ENCODE measurements at regions of chr1 and their contacts with region 1.

Region 1: GRCh38 chr1:214551436-214552173 is at the start of gene PTPN14:
- DNase-seq: peak; percentile 98
- H3K4me3 ChIP-seq: peak within 1 kb of the TSS; percentile 92
- H3K27ac ChIP-seq: peak within 1 kb of the TSS; percentile 93
- H3K4me1 ChIP-seq: peaks cover 30% of the 10 kb centered on the region
- H3K27me3 ChIP-seq: no peaks in the 10 kb centered on the region
- CTCF ChIP-seq: peak; percentile 35; the same call in 1 of the 2 replicates
- total RNA-seq, gene PTPN14: 103 and 114 TPM in 2 replicates

Region 2: GRCh38 chr1:214404154-214404553 is 147.5 kb before region 1 on chr1:
- CTCF ChIA-PET with region 1: interaction called, 4 read pairs
- POLR2A ChIA-PET with region 1: no interaction called
- intact Hi-C with region 1: loop called (anchors 2 kb)
- DNase-seq: peak; percentile 97
- H3K4me3 ChIP-seq: no peak overlapping the region
- H3K27ac ChIP-seq: peak overlapping the region; percentile 95
- H3K4me1 ChIP-seq: peaks cover 92% of the 10 kb centered on the region
- H3K27me3 ChIP-seq: no peaks in the 10 kb centered on the region
- CTCF ChIP-seq: no peak

Region 3: GRCh38 chr1:214454619-214455396 is 96.8 kb before region 1 on chr1:
- CTCF ChIA-PET with region 1: interaction called, 3 read pairs
- POLR2A ChIA-PET with region 1: interaction called, 3 read pairs
- intact Hi-C with region 1: loop called (anchors 2 kb)
- DNase-seq: peak; percentile 98
- H3K4me3 ChIP-seq: peak overlapping the region; percentile 15
- H3K27ac ChIP-seq: peak overlapping the region; percentile 80
- H3K4me1 ChIP-seq: peaks cover 68% of the 10 kb centered on the region
- H3K27me3 ChIP-seq: no peaks in the 10 kb centered on the region
- CTCF ChIP-seq: no peak

Region 4: DNA sequence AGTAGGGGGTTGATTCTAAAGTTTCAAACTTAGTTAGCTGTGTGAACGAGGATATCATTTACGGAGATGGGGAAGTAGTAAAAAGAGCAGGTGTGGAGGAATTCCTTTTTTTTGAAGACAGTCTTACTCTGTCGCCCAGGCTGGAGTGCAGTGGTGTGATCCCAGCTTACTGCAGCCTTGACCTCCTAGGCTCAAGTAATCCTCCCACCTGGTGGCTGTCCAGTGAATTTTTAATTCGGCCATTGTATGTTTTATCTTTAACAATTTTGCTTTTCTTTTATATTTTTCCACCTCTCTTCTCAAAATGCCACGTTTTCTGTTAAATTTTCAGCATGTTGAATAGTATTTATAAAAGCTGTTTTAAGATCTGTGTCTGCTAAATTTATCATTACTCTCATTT is 39.1 kb after region 1 on chr1:
- CTCF ChIA-PET with region 1: no interaction called
- POLR2A ChIA-PET with region 1: no interaction called
- intact Hi-C with region 1: no loop called
- DNase-seq: no peak
- H3K4me3 ChIP-seq: no peak overlapping the region
- H3K27ac ChIP-seq: no peak overlapping the region
- H3K4me1 ChIP-seq: no peaks in the 10 kb centered on the region
- H3K27me3 ChIP-seq: no peaks in the 10 kb centered on the region
- CTCF ChIP-seq: no peak

Region 5: GRCh38 chr1:214707306-214708087 is 155.9 kb after region 1 on chr1:
- CTCF ChIA-PET with region 1: no interaction called
- POLR2A ChIA-PET with region 1: no interaction called
- intact Hi-C with region 1: no loop called
- DNase-seq: no peak
- H3K4me3 ChIP-seq: no peak overlapping the region
- H3K27ac ChIP-seq: no peak overlapping the region
- H3K4me1 ChIP-seq: no peaks in the 10 kb centered on the region
- H3K27me3 ChIP-seq: peaks cover 8% of the 10 kb centered on the region
- CTCF ChIP-seq: no peak